CD4-positive, alpha-beta memory T cell (primary cell): ENCODE measurements at regions of chr15 and their contacts with region 1.

Region 1: GRCh38 chr15:52735231-52736089 is 54.7 kb downstream of the ONECUT1 start:
- DNase-seq: peak; percentile 76 to 83 (median 77)
- H3K4me3 ChIP-seq: no peak overlapping the region
- H3K4me3 Mint-ChIP-seq: no peak overlapping the region
- H3K27ac ChIP-seq: no peak overlapping the region
- H3K27ac Mint-ChIP-seq: peak overlapping the region in 2 of 7 donors; percentile 7 to 47
- H3K4me1 ChIP-seq: peaks cover 3% of the 10 kb centered on the region
- H3K4me1 Mint-ChIP-seq: peaks cover 1 to 5% (median 3%) of the 10 kb centered on the region in 4 donors
- H3K27me3 ChIP-seq: no peaks in the 10 kb centered on the region
- H3K27me3 Mint-ChIP-seq: peaks cover 6 to 7% of the 10 kb centered on the region in 2 donors

Region 2: DNA sequence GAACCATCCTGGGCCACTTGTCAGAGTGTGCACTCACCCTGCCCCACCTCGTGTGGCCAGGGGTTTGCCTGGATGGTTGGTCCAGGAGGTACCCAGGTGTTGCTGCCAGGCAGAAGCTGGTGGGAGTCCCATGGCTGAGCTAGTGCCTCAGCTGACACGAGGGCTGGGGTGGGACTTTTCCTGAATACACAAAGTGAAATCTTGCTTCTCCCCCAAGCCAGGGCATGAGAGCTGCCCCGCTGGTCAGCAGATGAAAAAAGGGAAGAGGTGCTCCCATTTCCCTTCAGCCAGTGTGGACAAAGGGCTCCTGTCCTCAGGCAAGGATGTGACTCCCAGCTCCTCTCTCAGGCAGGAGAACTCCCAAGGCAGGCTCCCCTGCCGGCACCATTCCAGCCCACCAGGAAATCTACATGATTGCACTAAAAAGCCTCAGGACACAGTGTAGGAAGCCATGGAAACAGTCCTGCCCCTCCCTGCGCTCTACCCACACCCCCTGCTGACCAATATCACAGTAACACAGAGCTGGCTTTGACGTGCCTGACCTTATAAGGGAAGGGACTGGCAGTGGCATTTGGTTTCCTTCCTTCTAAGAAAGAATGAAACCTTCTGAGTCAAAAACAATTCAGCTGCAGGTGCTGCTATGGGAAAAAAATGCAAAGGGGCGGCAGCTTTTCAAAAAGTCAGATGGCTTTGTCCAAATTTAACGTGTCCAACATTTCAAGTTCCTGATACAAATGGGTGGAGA is 473.8 kb before region 1 on chr15:
- CTCF ChIA-PET with region 1: interaction called, 190 read pairs
- POLR2A ChIA-PET with region 1: interaction called, 12 read pairs
- intact Hi-C with region 1: loop called (anchors 1 kb)
- DNase-seq: peak; percentile 34 to 53 (median 49)
- H3K4me3 ChIP-seq: no peak overlapping the region
- H3K4me3 Mint-ChIP-seq: peak overlapping the region in 7 of 8 donors; percentile 55 to 78 (median 76)
- H3K27ac ChIP-seq: peak overlapping the region; percentile 32
- H3K27ac Mint-ChIP-seq: peak overlapping the region; percentile 50 to 93 (median 76)
- H3K4me1 ChIP-seq: peaks cover 38% of the 10 kb centered on the region
- H3K4me1 Mint-ChIP-seq: peaks cover 31 to 43% (median 39%) of the 10 kb centered on the region in 4 donors
- H3K27me3 ChIP-seq: no peaks in the 10 kb centered on the region
- H3K27me3 Mint-ChIP-seq: no peaks in the 10 kb centered on the region

Region 3: GRCh38 chr15:52568601-52569256 is 166.7 kb before region 1 on chr15 and contains the start of gene ARPP19:
- CTCF ChIA-PET with region 1: interaction called, 3 read pairs
- POLR2A ChIA-PET with region 1: interaction called, 6 read pairs
- intact Hi-C with region 1: loop called (anchors 10 kb)
- DNase-seq: peak; percentile 78 to 84 (median 80)
- H3K4me3 ChIP-seq: peak within 1 kb of the TSS; percentile 64 to 80
- H3K4me3 Mint-ChIP-seq: peak within 1 kb of the TSS; percentile 94 to 100 (median 96)
- H3K27ac ChIP-seq: peak within 1 kb of the TSS; percentile 98
- H3K27ac Mint-ChIP-seq: peak within 1 kb of the TSS; percentile 98 to 100 (median 100)
- H3K4me1 ChIP-seq: peaks cover 44% of the 10 kb centered on the region
- H3K4me1 Mint-ChIP-seq: peaks cover 31 to 46% (median 38%) of the 10 kb centered on the region in 4 donors
- H3K27me3 ChIP-seq: no peaks in the 10 kb centered on the region
- H3K27me3 Mint-ChIP-seq: no peaks in the 10 kb centered on the region
- total RNA-seq, gene ARPP19: 105 to 130 TPM

Region 4: GRCh38 chr15:52636459-52636858 is 99.0 kb before region 1 on chr15:
- CTCF ChIA-PET with region 1: interaction called, 10 read pairs
- POLR2A ChIA-PET with region 1: no interaction called
- intact Hi-C with region 1: no loop called
- DNase-seq: no peak
- H3K4me3 ChIP-seq: no peak overlapping the region
- H3K4me3 Mint-ChIP-seq: no peak overlapping the region
- H3K27ac ChIP-seq: no peak overlapping the region
- H3K27ac Mint-ChIP-seq: no peak overlapping the region
- H3K4me1 ChIP-seq: no peaks in the 10 kb centered on the region
- H3K4me1 Mint-ChIP-seq: peaks cover 0 to 10% (median 4%) of the 10 kb centered on the region in 4 donors
- H3K27me3 ChIP-seq: no peaks in the 10 kb centered on the region
- H3K27me3 Mint-ChIP-seq: no peaks in the 10 kb centered on the region

Region 5: DNA sequence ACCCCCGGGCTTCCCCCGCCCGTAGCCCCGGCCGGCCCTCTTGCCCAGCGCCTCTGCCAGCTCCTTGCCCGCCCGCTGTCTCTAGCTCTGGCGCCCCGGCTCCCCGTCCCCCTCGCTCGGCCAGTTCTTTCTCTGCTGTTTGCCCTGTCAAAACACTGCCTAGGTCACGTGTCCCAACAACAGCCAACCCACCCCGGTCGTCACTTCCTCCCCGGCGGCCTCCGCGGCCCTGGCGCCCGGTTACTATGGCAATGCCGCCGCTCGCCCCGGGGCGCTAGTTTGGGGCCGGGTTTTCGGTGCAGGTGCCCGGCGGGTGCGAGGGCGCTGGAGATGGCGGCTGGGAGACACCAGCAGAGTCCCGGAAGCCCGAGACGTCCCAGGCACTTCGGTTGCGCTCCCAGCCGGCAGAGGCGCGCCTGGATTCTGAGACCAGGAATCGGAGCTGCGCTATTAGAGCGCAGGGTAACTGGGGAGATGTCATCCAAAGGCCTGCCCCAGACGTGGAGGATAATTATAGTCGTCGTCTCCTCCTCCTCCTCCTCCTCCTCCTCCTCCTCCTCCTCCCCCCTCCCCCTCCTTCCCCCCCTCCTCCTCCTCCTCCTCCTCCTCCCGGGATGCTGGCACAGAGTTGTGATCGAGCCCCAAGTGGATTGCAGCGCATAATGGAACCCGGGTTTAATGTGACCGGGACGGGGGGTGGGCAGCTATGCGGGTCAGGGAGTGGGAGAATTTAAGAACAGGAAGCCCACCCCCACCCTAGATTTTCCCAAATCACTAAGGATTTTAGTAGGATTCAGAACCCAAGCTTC is 56.0 kb before region 1 on chr15 and contains the start of gene ATOSA:
- CTCF ChIA-PET with region 1: interaction called, 62 read pairs
- POLR2A ChIA-PET with region 1: interaction called, 49 read pairs
- intact Hi-C with region 1: loop called (anchors 1 kb)
- DNase-seq: peak; percentile 91 to 96 (median 92)
- H3K4me3 ChIP-seq: peak within 1 kb of the TSS; percentile 55 to 82
- H3K4me3 Mint-ChIP-seq: peak within 1 kb of the TSS; percentile 93 to 99 (median 99)
- H3K27ac ChIP-seq: peak within 1 kb of the TSS; percentile 97
- H3K27ac Mint-ChIP-seq: peak within 1 kb of the TSS; percentile 93 to 100 (median 100)
- H3K4me1 ChIP-seq: peaks cover 61% of the 10 kb centered on the region
- H3K4me1 Mint-ChIP-seq: peaks cover 28 to 80% (median 41%) of the 10 kb centered on the region in 4 donors
- H3K27me3 ChIP-seq: no peaks in the 10 kb centered on the region
- H3K27me3 Mint-ChIP-seq: no peaks in the 10 kb centered on the region
- total RNA-seq, gene ATOSA: 95.6 to 97.1 TPM